Dorsolateral prefrontal cortex (tissue), 120 donors: ENCODE measurements at regions of chr20 and their contacts with region 1.

Region 1: DNA sequence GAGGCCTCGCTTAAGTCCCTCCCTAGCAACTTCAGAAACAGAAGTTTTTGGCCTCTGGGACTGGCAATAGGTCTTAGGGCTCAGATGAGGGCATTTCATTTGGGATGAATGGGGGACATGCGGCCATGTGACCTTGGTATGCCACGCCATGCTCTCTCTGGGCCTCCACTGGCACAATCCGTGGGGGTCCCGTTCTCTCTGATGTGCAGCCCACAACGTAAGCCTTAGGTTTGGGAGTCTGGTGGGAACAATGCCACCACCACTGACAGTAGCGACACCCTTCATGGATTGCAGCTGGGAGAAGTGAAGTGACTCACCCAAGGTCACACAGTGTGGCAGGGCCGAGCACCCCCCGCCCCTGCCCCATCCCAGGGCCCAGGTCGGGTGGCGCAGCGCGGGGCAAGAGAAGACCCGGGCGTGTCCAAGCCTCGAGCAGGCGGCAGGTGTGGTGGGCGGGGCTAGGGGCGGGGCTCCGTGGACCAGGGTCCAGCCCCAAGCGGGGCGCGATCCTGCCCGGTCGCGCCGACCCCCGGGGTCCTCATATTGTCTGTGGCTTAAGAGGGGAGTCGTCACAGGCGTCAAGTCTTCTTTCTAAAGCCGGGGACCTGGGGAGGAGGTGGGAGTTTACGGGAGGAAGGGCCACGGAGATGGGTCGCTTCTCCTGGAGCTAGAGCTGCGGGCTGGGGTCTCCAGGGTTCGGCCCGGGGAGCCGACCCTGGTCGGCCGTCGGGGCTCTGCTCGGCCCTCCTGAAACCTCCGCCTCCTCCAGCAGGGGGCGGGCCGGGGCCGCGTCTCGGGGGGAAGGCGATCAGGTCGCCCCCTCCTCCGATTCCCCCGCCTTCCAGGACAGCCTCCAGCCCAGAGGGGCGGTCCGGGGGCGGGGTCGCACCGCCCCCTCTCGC is 698 bp upstream of the CEBPB start:
- DNase-seq: peak in 7 of 10 donors; percentile 30 to 77 (median 65)
- H3K4me3 ChIP-seq: peak overlapping the region; percentile 42 to 88 (median 73)
- H3K27ac ChIP-seq: peak overlapping the region in 54 of 59 donors; percentile 71 to 99 (median 96)
- H3K27me3 ChIP-seq: peaks cover 0 to 33% (median 0%) of the 10 kb centered on the region in 45 donors
- CTCF ChIP-seq: peak; percentile 46 to 91 (median 72)

Region 2: DNA sequence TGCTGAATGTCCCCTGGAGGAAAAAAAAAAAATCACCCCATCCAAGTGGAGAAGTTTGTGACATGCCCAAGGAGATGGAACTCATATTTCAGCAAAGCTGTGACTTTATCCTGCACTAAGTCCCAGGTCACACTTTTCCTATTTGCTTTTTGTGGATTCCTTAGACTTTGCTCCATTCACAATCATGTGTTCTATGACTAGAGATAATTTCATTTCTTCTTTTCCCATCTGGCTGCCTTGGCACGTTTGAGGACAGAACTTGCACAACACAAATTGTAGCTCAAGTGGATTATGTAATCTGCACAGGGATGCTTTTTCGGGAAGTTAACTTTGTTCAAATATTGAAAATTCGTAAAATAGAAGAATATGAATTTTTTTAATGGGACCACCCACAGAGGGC is 219.6 kb after region 1 on chr20:
- intact Hi-C with region 1: loop called in 1 of 2 experiments (anchors 5 kb)
- DNase-seq: no peak
- H3K4me3 ChIP-seq: no peak overlapping the region
- H3K27ac ChIP-seq: peak overlapping the region in 7 of 59 donors; percentile 10 to 58 (median 28)
- H3K27me3 ChIP-seq: no peaks in the 10 kb centered on the region
- CTCF ChIP-seq: no peak

Region 3: DNA sequence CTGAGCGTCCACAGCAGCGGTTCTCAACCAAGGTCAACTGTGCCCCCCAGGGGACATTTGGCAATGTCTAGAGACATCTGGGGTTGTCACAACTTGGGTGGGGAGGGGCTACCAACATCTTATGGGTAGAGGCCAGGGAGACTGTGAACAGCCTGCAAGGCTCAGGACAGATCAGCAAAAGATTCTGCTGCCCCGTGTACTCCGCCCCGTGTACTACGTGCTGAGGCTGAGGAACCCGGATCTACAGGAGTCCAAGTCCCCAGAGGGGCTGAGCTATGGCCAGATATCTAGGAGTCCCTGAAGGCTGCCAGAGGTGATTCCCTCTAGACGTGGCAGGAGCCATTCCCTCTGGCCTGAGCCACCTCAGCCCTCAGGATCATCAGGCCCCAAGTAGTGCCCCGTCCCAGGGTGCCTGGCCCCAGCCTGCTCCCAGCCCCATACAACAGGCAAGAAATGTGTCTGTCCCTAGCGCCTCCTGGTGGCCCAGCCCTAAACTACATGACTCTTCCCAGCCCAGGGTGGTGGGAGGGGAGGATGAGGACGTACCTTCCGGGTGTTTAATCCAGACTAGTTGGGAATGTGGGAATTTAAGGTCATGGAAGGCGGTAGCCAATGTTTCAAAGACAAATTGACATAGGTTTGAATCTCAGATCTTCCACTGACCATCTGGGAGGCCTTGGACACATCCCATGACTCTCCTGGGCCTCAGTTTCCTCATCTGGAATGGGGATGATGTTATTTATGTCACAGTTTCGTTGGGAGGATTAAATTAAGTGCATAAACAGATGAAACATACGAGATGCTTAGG is 270.7 kb after region 1 on chr20:
- intact Hi-C with region 1: loop called (anchors 2 kb)
- DNase-seq: peak; percentile 25 to 87 (median 78)
- H3K4me3 ChIP-seq: no peak overlapping the region
- H3K27ac ChIP-seq: peak overlapping the region in 5 of 59 donors; percentile 9 to 53 (median 21)
- H3K27me3 ChIP-seq: no peaks in the 10 kb centered on the region
- CTCF ChIP-seq: peak; percentile 72 to 94 (median 88)

Region 4: GRCh38 chr20:50575847-50576720 is 386.2 kb after region 1 on chr20:
- intact Hi-C with region 1: loop called (anchors 2 kb)
- DNase-seq: peak in 9 of 10 donors; percentile 54 to 79 (median 75)
- H3K4me3 ChIP-seq: no peak overlapping the region
- H3K27ac ChIP-seq: peak overlapping the region in 30 of 59 donors; percentile 15 to 79 (median 41)
- H3K27me3 ChIP-seq: no peaks in the 10 kb centered on the region
- CTCF ChIP-seq: peak; percentile 44 to 86 (median 74)

Region 5: DNA sequence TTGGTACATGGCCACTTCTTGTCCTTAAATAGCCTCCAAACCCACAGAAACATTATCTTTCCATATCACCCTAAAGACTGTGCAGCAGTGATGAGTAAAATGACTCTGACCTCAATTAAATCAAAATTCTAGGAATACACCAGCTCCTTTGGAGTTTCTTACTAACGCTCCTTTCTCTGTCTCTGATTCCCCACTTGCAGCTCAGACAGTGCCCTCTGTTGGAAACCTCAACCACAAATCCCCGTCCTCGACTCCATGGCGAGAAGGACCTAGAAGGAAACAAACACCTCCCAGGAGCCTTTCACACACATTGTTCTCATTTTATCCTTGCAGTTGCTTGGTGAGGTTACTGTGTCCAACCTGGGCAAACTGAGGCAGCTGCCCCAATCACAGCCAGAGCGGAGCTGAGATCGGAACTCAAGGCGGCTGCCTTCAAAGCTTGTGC is 523.7 kb after region 1 on chr20:
- intact Hi-C with region 1: loop called in 1 of 2 experiments (anchors 10 kb)
- DNase-seq: no peak
- H3K4me3 ChIP-seq: no peak overlapping the region
- H3K27ac ChIP-seq: no peak overlapping the region
- H3K27me3 ChIP-seq: peaks cover 0 to 3% (median 0%) of the 10 kb centered on the region in 45 donors
- CTCF ChIP-seq: peak in 39 of 56 donors; percentile 17 to 57 (median 37)

Region 6: DNA sequence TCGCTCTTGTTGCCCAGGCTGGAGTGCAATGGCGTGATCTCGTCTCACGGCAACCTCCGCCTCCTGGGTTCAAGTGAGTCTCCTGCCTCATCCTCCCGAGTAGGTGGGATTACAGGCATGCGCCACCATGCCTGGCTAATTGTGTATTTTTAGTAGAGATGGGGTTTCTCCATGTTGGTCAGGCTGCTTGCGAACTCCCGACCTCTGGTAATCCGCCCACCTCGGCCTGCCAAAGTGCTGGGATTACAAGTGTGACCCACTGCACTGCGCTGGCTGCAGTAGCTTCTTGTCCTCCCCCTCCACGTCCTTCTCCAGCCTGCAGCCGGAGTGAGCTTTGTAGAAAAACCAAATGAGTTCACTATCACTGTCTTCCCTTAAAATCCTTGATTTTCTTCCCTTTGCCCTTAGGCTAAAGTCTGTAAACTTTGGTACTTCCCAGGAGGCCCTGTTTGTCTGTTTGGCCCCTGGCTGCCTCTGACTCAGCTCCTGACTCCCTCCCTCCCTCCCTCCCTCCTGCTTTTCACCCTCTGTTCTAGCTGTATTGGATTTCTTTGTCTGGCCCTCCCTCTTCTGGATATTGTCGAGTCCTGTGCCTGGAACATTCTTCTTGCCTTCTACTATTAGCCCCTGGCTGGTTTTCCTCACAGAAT is 554.3 kb after region 1 on chr20:
- intact Hi-C with region 1: loop called in 1 of 2 experiments (anchors 10 kb)
- DNase-seq: no peak
- H3K4me3 ChIP-seq: no peak overlapping the region
- H3K27ac ChIP-seq: peak overlapping the region in 36 of 59 donors; percentile 2 to 80 (median 58)
- H3K27me3 ChIP-seq: no peaks in the 10 kb centered on the region
- CTCF ChIP-seq: peak in 18 of 56 donors; percentile 11 to 38 (median 23)

Region 7: GRCh38 chr20:50790651-50791277 is 600.8 kb after region 1 on chr20:
- intact Hi-C with region 1: loop called in 1 of 2 experiments (anchors 5 kb)
- DNase-seq: peak; percentile 69 to 90 (median 82)
- H3K4me3 ChIP-seq: peak overlapping the region in 51 of 59 donors; percentile 5 to 62 (median 41)
- H3K27ac ChIP-seq: peak overlapping the region; percentile 17 to 96 (median 83)
- H3K27me3 ChIP-seq: no peaks in the 10 kb centered on the region
- CTCF ChIP-seq: peak; percentile 45 to 90 (median 79)